CD14-positive monocyte (primary cell): ENCODE measurements at regions of chr10 and their contacts with region 1.

Region 1: DNA sequence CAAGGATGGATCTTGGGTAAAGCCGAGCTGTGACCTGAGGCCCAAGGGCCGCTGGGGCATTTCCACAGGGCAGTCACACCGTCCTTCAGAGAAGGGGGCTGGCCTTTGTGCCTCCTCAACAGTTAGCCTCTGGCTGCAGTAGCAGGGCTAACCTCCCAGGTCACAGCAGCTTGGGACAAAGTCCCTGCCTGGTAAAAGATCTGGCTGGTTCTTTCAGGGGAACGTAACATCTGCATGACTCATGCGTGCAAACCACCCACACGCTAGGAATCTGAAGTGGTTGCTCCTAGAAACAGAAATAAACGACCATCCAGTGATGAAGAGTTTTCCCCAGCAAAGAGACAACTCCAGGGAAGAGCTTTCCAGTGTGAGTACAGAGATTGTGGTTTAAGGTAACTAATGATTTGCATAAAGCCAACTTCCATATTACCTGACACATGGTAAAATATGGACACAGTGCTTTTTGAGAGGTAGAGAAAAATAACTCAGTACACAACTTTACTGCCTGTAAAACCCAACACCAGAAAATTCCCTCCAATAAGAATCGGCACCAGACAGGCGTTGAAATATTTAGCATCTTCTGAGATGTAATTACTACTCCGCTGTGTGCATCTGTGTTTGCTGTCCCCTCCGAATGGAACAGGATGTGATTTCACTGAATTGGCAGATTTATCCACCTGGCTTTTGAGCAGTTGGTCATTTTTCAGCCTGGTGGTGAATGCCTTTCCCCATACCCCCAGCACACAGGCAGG is 84.9 kb upstream of the ADRB1 start:
- DNase-seq: peak in 2 of 3 donors; percentile 6 to 39
- H3K4me3 ChIP-seq: no peak overlapping the region
- H3K4me3 Mint-ChIP-seq: no peak overlapping the region
- H3K27ac ChIP-seq: no peak overlapping the region
- H3K27ac Mint-ChIP-seq: peak overlapping the region in 1 of 7 donors; percentile 50
- H3K4me1 ChIP-seq: peaks cover 10 to 14% of the 10 kb centered on the region in 2 donors
- H3K4me1 Mint-ChIP-seq: peaks cover 22% of the 10 kb centered on the region
- H3K27me3 ChIP-seq: no peaks in the 10 kb centered on the region
- H3K27me3 Mint-ChIP-seq: peaks cover 2 to 4% (median 2%) of the 10 kb centered on the region in 3 donors
- CTCF ChIP-seq: no peak

Region 2: GRCh38 chr10:113843972-113844485 is 114.8 kb before region 1 on chr10:
- intact Hi-C with region 1: no loop called
- DNase-seq: peak; percentile 17 to 56 (median 44)
- H3K4me3 ChIP-seq: peak overlapping the region; percentile 12 to 64 (median 17)
- H3K4me3 Mint-ChIP-seq: peak overlapping the region; percentile 38 to 92
- H3K27ac ChIP-seq: peak overlapping the region in 1 of 2 donors; percentile 30
- H3K27ac Mint-ChIP-seq: peak overlapping the region in 2 of 7 donors; percentile 13 to 50
- H3K4me1 ChIP-seq: peaks cover 18 to 28% of the 10 kb centered on the region in 2 donors
- H3K4me1 Mint-ChIP-seq: peaks cover 26% of the 10 kb centered on the region
- H3K27me3 ChIP-seq: no peaks in the 10 kb centered on the region
- H3K27me3 Mint-ChIP-seq: no peaks in the 10 kb centered on the region
- CTCF ChIP-seq: no peak

Region 3: DNA sequence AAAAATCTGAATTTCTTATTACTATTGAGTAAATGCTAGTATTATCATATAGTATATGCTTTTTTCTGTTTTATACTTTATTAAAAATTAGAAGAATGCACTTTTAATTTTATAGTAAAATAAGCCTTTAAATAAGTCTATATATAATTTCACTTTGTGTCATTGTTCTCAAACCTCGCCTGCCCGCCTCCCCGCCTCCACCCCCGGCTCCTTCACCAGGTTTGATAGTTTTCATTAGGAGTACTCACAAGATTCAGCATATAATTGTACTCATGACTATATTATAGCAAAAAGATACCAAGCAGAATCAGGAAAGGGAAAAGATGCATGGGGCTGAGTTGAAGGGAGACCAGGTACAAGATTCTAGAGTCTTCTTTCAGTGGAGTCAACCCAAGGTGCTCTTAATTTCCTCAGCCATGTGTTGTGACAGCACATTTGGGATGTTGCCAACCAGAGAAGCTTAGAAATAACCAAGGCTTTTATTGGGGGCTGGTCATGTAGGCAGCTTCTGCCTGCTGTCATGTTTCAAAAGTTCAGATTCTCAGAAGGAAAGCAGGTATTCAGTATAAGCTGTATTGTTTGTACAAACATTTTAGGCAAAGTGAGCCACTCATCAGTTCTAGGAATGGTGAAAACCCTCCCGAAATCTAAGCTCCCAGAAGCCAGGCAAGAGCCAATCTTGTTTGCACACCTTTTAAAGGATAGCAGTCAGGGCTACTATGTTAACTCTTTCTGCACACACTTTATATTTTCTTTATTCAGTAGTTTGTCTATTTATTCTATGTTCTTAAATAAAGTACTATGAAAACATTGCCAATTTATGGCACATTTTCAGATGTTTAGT is 92.0 kb before region 1 on chr10:
- intact Hi-C with region 1: loop called in 1 of 2 experiments (anchors 10 kb)
- DNase-seq: no peak
- H3K4me3 ChIP-seq: no peak overlapping the region
- H3K4me3 Mint-ChIP-seq: no peak overlapping the region
- H3K27ac ChIP-seq: no peak overlapping the region
- H3K27ac Mint-ChIP-seq: no peak overlapping the region
- H3K4me1 ChIP-seq: peaks cover 13 to 33% of the 10 kb centered on the region in 2 donors
- H3K4me1 Mint-ChIP-seq: peaks cover 27% of the 10 kb centered on the region
- H3K27me3 ChIP-seq: no peaks in the 10 kb centered on the region
- H3K27me3 Mint-ChIP-seq: no peaks in the 10 kb centered on the region
- CTCF ChIP-seq: no peak

Region 4: GRCh38 chr10:113891476-113891875 is 67.3 kb before region 1 on chr10:
- intact Hi-C with region 1: no loop called
- DNase-seq: no peak
- H3K4me3 ChIP-seq: no peak overlapping the region
- H3K4me3 Mint-ChIP-seq: no peak overlapping the region
- H3K27ac ChIP-seq: no peak overlapping the region
- H3K27ac Mint-ChIP-seq: peak overlapping the region in 1 of 7 donors; percentile 13
- H3K4me1 ChIP-seq: no peaks in the 10 kb centered on the region
- H3K4me1 Mint-ChIP-seq: peaks cover 3% of the 10 kb centered on the region
- H3K27me3 ChIP-seq: no peaks in the 10 kb centered on the region
- H3K27me3 Mint-ChIP-seq: no peaks in the 10 kb centered on the region
- CTCF ChIP-seq: no peak

Region 5: GRCh38 chr10:113922787-113923570 is 35.8 kb before region 1 on chr10:
- intact Hi-C with region 1: no loop called
- DNase-seq: no peak
- H3K4me3 ChIP-seq: no peak overlapping the region
- H3K4me3 Mint-ChIP-seq: no peak overlapping the region
- H3K27ac ChIP-seq: no peak overlapping the region
- H3K27ac Mint-ChIP-seq: peak overlapping the region in 1 of 7 donors; percentile 7
- H3K4me1 ChIP-seq: no peaks in the 10 kb centered on the region
- H3K4me1 Mint-ChIP-seq: peaks cover 6% of the 10 kb centered on the region
- H3K27me3 ChIP-seq: peaks cover 3 to 4% of the 10 kb centered on the region in 2 donors
- H3K27me3 Mint-ChIP-seq: peaks cover 2 to 7% (median 4%) of the 10 kb centered on the region in 3 donors
- CTCF ChIP-seq: no peak

Region 6: DNA sequence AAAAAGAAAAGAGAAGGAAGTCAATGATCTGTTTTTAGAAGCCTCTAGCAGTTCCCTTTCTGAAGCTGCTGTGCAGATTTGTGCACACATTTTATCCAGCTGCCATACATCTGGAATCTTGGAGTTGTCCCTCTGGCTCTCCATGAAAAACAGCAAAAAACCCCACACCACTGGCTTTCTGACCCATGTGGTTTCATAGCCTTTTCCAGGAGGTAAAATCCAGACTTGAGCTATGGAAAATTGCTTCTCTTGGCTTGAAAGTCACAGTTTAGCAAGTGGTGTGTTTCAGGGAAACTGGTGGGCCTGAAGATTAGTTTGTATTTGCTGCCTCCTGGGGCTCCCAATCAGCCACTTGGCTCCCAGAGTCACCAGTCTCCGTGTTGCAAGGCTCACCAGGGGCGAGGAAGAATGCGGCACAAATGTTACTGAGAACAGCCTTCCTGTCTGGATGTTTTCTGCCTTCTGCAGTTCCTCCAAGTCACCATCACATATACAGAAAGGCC is 34.7 kb after region 1 on chr10:
- intact Hi-C with region 1: loop called in 1 of 2 experiments (anchors 5 kb)
- DNase-seq: peak in 2 of 3 donors; percentile 31 to 32
- H3K4me3 ChIP-seq: peak overlapping the region in 1 of 3 experiments; percentile 60
- H3K4me3 Mint-ChIP-seq: peak overlapping the region; percentile 27 to 75
- H3K27ac ChIP-seq: peak overlapping the region in 1 of 2 donors; percentile 3
- H3K27ac Mint-ChIP-seq: peak overlapping the region in 4 of 7 donors; percentile 18 to 72 (median 52)
- H3K4me1 ChIP-seq: peaks cover 45 to 67% of the 10 kb centered on the region in 2 donors
- H3K4me1 Mint-ChIP-seq: peaks cover 73% of the 10 kb centered on the region
- H3K27me3 ChIP-seq: no peaks in the 10 kb centered on the region
- H3K27me3 Mint-ChIP-seq: peaks cover 4 to 8% (median 6%) of the 10 kb centered on the region in 3 donors
- CTCF ChIP-seq: no peak

Region 7: GRCh38 chr10:114043532-114044246 is 84.9 kb after region 1 on chr10 and contains the start of gene ADRB1:
- intact Hi-C with region 1: loop called in 1 of 2 experiments (anchors 5 kb)
- DNase-seq: peak; percentile 38 to 64 (median 64)
- H3K4me3 ChIP-seq: peak within 1 kb of the TSS; percentile 34 to 82 (median 38)
- H3K4me3 Mint-ChIP-seq: peak within 1 kb of the TSS; percentile 89 to 99
- H3K27ac ChIP-seq: peak within 1 kb of the TSS in 1 of 2 donors; percentile 63
- H3K27ac Mint-ChIP-seq: peak within 1 kb of the TSS; percentile 72 to 91 (median 81)
- H3K4me1 ChIP-seq: peaks cover 42 to 60% of the 10 kb centered on the region in 2 donors
- H3K4me1 Mint-ChIP-seq: peaks cover 48% of the 10 kb centered on the region
- H3K27me3 ChIP-seq: peaks cover 15 to 57% of the 10 kb centered on the region in 2 donors
- H3K27me3 Mint-ChIP-seq: peaks cover 35 to 42% (median 41%) of the 10 kb centered on the region in 3 donors
- CTCF ChIP-seq: no peak
- polyA plus RNA-seq, gene ADRB1: 0.05 to 3.4 TPM in 2 of 3 donors, not detected in the other